Activated B cell treated with CpG ODN at 0.5 μM for 24 hours (primary cell): ENCODE measurements at regions of chr15 and their contacts with region 1.

Region 1: GRCh38 chr15:75335705-75336355 is at the start of gene COMMD4:
- DNase-seq: peak; percentile 68
- ATAC-seq: peak; percentile 87
- H3K4me3 Mint-ChIP-seq: peak within 1 kb of the TSS; percentile 95
- H3K27ac Mint-ChIP-seq: peak within 1 kb of the TSS; percentile 88
- H3K4me1 Mint-ChIP-seq: peaks cover 20% of the 10 kb centered on the region
- H3K27me3 Mint-ChIP-seq: peaks cover 3% of the 10 kb centered on the region
- CTCF ChIP-seq: no peak
- total RNA-seq, gene COMMD4: 51.8 and 54.7 TPM in 2 replicates

Region 2: GRCh38 chr15:75321708-75322107 is 14.1 kb before region 1 on chr15:
- CTCF ChIA-PET with region 1: no interaction called
- POLR2A ChIA-PET with region 1: no interaction called
- intact Hi-C with region 1: no loop called
- DNase-seq: no peak
- ATAC-seq: no peak
- H3K4me3 Mint-ChIP-seq: no peak overlapping the region
- H3K27ac Mint-ChIP-seq: no peak overlapping the region
- H3K4me1 Mint-ChIP-seq: no peaks in the 10 kb centered on the region
- H3K27me3 Mint-ChIP-seq: no peaks in the 10 kb centered on the region
- CTCF ChIP-seq: no peak

Region 3: DNA sequence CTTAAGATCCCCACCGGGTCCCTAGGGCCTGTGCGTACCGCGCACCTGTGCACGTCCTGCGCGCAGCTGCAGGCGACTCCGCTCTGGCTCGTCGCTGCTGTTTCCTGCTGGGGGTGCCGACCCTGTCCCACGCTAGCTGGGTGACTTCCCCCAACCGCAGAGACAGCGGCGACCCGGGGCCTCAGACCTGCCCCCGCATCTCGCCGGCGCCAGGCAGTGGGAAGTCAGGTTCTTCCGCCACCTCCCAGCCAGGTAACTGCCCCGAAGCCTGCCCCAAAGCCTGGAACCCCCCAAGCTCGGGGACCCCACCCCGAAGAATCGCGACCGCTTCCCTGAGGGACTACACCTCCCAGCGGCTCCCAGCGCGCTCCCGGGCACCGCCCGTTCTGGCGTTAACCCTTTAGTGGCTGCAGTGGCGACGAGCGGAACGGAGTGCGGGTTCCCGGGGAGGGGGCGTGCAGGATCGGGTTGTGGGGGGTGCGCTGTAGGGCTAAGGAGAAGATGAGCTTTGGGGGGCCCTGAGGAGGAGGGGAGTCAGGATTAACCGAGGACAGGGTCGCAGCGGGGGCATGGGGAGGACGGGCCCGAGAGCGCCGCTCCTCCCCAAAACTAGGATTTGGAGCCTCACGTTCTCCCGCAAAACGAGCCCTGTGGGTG is 11.5 kb after region 1 on chr15:
- CTCF ChIA-PET with region 1: no interaction called
- POLR2A ChIA-PET with region 1: interaction called, 3 read pairs
- intact Hi-C with region 1: loop called (anchors 1 kb)
- DNase-seq: peak; percentile 69
- ATAC-seq: peak; percentile 77
- H3K4me3 Mint-ChIP-seq: peak overlapping the region; percentile 86
- H3K27ac Mint-ChIP-seq: peak overlapping the region; percentile 85
- H3K4me1 Mint-ChIP-seq: peaks cover 46% of the 10 kb centered on the region
- H3K27me3 Mint-ChIP-seq: peaks cover 1% of the 10 kb centered on the region
- CTCF ChIP-seq: no peak

Region 4: GRCh38 chr15:75397494-75397893 is 61.7 kb after region 1 on chr15:
- CTCF ChIA-PET with region 1: no interaction called
- POLR2A ChIA-PET with region 1: no interaction called
- intact Hi-C with region 1: loop called (anchors 10 kb)
- DNase-seq: no peak
- ATAC-seq: no peak
- H3K4me3 Mint-ChIP-seq: no peak overlapping the region
- H3K27ac Mint-ChIP-seq: no peak overlapping the region
- H3K4me1 Mint-ChIP-seq: peaks cover 4% of the 10 kb centered on the region
- H3K27me3 Mint-ChIP-seq: no peaks in the 10 kb centered on the region
- CTCF ChIP-seq: no peak

Region 5: GRCh38 chr15:75446151-75446550 is 110.3 kb after region 1 on chr15:
- CTCF ChIA-PET with region 1: no interaction called
- POLR2A ChIA-PET with region 1: interaction called, 12 read pairs
- intact Hi-C with region 1: no loop called
- DNase-seq: no peak
- ATAC-seq: no peak
- H3K4me3 Mint-ChIP-seq: peak overlapping the region; percentile 53
- H3K27ac Mint-ChIP-seq: peak overlapping the region; percentile 69
- H3K4me1 Mint-ChIP-seq: peaks cover 59% of the 10 kb centered on the region
- H3K27me3 Mint-ChIP-seq: no peaks in the 10 kb centered on the region
- CTCF ChIP-seq: no peak